Panc1 (cell line): ENCODE measurements at regions of chr2 and their contacts with region 1.

Region 1: GRCh38 chr2:30694286-30695055 is 112.8 kb downstream of the CAPN13 start:
- DNase-seq: no peak
- ATAC-seq: no peak
- H3K4me3 ChIP-seq: no peak overlapping the region
- H3K27ac ChIP-seq: no peak overlapping the region
- H3K4me1 ChIP-seq: no peaks in the 10 kb centered on the region
- H3K27me3 ChIP-seq: no peaks in the 10 kb centered on the region; the same call in 1 of the 2 replicates
- CTCF ChIP-seq: no peak

Region 2: DNA sequence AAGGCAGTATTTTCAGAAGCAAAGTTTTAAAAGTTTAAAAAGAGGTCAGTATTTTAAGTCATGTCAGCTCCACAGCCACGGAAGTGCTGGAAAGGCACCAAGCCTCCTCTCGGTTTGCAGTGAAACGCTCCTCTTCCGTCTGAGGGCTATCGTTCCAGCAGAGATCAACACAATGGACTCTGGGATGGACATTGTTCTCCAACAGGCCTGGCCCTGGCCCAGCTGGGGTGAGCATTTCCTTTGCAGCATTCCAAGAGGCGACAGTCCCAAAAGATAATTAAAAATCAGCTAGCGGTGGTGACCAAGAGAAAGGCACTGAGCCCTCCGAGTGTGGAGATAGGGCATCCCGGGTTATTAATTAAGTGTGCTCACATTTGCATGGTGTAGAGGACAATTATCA is 343.4 kb before region 1 on chr2:
- CTCF ChIA-PET with region 1: interaction called, 10 read pairs
- POLR2A ChIA-PET with region 1: no interaction called
- in situ Hi-C with region 1: no loop called
- intact Hi-C with region 1: no loop called
- DNase-seq: no peak
- ATAC-seq: no peak
- H3K4me3 ChIP-seq: no peak overlapping the region
- H3K27ac ChIP-seq: no peak overlapping the region
- H3K4me1 ChIP-seq: no peaks in the 10 kb centered on the region
- H3K27me3 ChIP-seq: no peaks in the 10 kb centered on the region
- CTCF ChIP-seq: no peak